OCI-LY7 (cell line): ENCODE measurements at regions of chr11 and their contacts with region 1.

Region 1: DNA sequence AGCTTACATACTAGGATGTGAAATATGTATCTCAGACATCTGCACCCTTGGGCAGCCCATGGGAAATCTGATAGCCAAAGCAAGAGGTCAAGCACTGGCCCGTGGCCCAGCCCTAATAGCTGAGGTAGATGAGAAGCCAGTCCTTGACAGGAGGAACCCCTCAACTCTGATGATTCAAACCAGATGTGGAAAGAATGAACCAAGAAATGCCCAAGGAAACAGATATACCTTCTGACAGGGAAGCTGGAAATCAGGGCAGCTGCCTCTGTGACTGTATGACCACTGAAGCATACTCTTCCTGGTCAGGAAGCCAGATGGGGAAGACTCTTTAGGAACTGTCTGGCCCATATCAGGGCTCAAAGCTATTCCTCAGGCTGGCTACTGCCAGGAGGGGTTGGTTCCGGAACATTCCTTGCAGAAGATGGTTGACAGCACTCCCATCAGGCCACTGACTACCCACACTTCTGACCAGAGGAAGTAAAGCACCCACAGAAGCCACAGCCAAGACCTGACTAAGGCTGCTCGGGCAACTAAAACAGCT is 124.2 kb downstream of the SWAP70 start:
- DNase-seq: no peak
- H3K4me3 ChIP-seq: no peak overlapping the region
- H3K27ac ChIP-seq: no peak overlapping the region
- H3K4me1 ChIP-seq: no peaks in the 10 kb centered on the region
- CTCF ChIP-seq: no peak

Region 2: GRCh38 chr11:9639985-9640384 is 148.1 kb before region 1 on chr11:
- CTCF ChIA-PET with region 1: no interaction called
- POLR2A ChIA-PET with region 1: no interaction called
- intact Hi-C with region 1: no loop called
- DNase-seq: peak; percentile 41
- H3K4me3 ChIP-seq: no peak overlapping the region
- H3K27ac ChIP-seq: no peak overlapping the region
- H3K4me1 ChIP-seq: peaks cover 41% of the 10 kb centered on the region
- CTCF ChIP-seq: no peak

Region 3: GRCh38 chr11:9802291-9802861 is 14.3 kb after region 1 on chr11:
- CTCF ChIA-PET with region 1: no interaction called
- POLR2A ChIA-PET with region 1: interaction called, 12 read pairs
- intact Hi-C with region 1: no loop called
- DNase-seq: peak; percentile 40
- H3K4me3 ChIP-seq: no peak overlapping the region
- H3K27ac ChIP-seq: no peak overlapping the region
- H3K4me1 ChIP-seq: peaks cover 16% of the 10 kb centered on the region
- CTCF ChIP-seq: no peak

Region 4: DNA sequence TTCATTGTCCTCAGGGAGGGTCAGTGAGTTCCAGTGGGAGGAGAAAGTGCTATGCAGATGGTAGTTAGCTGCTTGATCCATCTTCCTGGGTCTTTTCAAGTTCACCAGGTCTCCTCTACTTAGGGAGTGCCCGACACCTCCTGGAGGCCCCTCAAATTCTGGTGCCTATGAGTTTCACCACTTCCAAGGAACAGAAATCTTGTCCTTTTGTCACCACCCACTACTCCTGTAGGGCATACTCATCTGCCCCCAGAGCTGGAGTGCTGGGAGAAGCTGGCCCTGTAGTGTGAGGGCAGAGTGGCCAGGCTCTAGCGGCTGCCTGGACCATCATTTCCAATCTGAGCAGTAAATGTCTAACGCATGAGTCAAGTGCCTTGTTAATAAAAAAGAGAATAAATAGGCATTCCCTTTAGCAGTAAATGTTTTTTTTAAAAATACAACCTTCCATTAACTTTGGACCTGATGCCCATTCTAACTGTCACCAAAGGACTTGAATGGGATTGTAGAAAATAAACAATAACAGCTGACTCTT is 893.0 kb after region 1 on chr11:
- CTCF ChIA-PET with region 1: no interaction called
- POLR2A ChIA-PET with region 1: no interaction called
- intact Hi-C with region 1: loop called (anchors 5 kb)
- DNase-seq: no peak
- H3K4me3 ChIP-seq: no peak overlapping the region
- H3K27ac ChIP-seq: no peak overlapping the region
- H3K4me1 ChIP-seq: no peaks in the 10 kb centered on the region
- CTCF ChIP-seq: no peak